PC-9 (cell line): ENCODE measurements at regions of chr12 and their contacts with region 1.

Region 1: GRCh38 chr12:53352331-53353256 is 16.4 kb upstream of the SP7 start:
- DNase-seq: peak; percentile 80
- H3K4me3 ChIP-seq: no peak overlapping the region
- H3K27ac ChIP-seq: peak overlapping the region; percentile 29
- H3K4me1 ChIP-seq: peaks cover 6% of the 10 kb centered on the region
- H3K27me3 ChIP-seq: no peaks in the 10 kb centered on the region
- CTCF ChIP-seq: peak; percentile 91

Region 2: GRCh38 chr12:53047221-53048042 is 305.2 kb before region 1 on chr12:
- CTCF ChIA-PET with region 1: interaction called, 4 read pairs
- POLR2A ChIA-PET with region 1: interaction called, 28 read pairs
- intact Hi-C with region 1: no loop called
- DNase-seq: peak in 1 of 2 experiments; percentile 86
- H3K4me3 ChIP-seq: no peak overlapping the region; the same call in 1 of the 2 replicates
- H3K27ac ChIP-seq: peak overlapping the region; percentile 36; the same call in 1 of the 2 replicates
- H3K4me1 ChIP-seq: peaks cover 25% of the 10 kb centered on the region
- H3K27me3 ChIP-seq: no peaks in the 10 kb centered on the region
- CTCF ChIP-seq: peak; percentile 42

Region 3: GRCh38 chr12:53213348-53213747 is 139.2 kb before region 1 on chr12:
- CTCF ChIA-PET with region 1: no interaction called
- POLR2A ChIA-PET with region 1: no interaction called
- intact Hi-C with region 1: no loop called
- DNase-seq: peak in 1 of 2 experiments; percentile 75
- H3K4me3 ChIP-seq: no peak overlapping the region
- H3K27ac ChIP-seq: no peak overlapping the region
- H3K4me1 ChIP-seq: peaks cover 30% of the 10 kb centered on the region
- H3K27me3 ChIP-seq: no peaks in the 10 kb centered on the region
- CTCF ChIP-seq: peak; percentile 92

Region 4: DNA sequence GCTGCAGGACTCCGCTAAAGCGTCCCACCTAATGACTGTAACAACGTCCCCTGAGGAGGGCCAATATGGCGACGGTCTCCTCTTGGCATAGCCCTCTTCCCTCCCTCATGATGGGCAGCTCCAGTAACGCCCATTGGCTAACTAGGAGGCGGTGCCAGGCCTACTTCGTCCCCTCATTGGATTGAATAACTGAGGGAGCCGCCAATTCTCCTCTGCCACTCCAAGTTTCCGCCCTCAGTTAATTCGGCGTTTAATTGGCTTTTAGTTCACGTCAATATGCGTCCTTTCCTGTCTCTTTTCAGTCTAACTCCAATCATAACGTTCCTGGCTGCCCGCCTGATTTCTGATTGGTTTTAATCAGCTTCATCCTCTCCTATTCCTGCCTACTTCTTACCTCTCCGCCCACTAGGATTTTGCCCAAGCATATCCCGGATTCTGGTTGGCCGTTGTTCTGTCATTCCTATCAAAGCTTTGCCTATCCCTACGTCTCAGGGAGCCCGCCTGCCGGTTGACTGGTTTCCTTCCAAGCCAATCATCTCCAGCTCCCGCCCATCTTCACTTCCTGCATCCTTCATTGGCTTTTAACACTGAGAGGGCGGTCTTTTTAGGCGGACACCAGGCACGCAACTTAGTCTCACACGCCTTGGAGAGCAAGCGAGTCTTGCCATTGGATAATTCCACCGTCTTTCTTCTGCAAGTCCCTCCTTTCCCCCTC is 27.0 kb after region 1 on chr12:
- CTCF ChIA-PET with region 1: interaction called, 24 read pairs
- POLR2A ChIA-PET with region 1: interaction called, 4 read pairs
- intact Hi-C with region 1: loop called (anchors 1 kb)
- DNase-seq: peak; percentile 98 to 100
- H3K4me3 ChIP-seq: peak overlapping the region; percentile 76
- H3K27ac ChIP-seq: peak overlapping the region; percentile 83
- H3K4me1 ChIP-seq: peaks cover 40% of the 10 kb centered on the region
- H3K27me3 ChIP-seq: no peaks in the 10 kb centered on the region
- CTCF ChIP-seq: no peak

Region 5: DNA sequence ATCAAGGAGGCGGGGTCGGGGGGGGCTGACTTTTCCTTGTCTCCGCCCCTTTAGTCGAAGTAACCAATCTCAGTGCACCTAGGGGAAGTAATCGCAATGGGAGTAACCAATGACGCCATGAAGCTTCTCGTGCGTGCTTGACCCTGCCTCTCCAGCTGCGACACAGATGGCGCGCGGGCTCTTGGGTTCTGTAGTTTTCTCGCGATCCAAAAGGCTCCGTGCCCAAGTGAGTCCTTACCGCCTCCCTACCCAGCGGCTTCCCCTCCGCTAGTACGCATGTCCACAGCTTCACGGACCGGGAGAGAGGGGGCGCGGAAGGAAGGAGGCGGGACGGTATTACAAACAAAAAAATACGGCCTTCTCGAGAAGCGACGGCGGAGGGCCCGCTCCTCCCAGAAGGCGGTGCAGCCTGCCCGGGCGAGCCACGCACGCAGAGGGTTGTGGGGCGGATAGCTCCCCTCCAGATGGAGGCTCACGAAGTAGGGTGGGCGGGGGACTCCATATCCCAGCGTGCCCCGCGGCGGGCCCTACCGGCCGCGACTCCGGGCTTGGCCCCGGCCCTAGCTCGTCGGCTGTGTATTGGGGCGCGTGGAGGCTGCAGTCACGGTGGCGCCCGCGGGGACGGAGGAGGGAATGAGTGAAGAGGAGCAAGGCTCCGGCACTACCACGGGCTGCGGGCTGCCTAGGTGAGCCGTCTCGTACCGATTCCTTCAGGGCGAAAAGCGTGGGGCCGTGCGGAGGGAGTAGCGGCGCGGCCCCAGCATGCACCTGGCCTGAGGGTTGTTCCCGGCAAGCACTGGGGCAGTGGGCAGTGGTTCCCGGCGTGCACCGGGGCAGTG is 148.4 kb after region 1 on chr12 and contains the start of gene TARBP2:
- CTCF ChIA-PET with region 1: interaction called, 3 read pairs
- POLR2A ChIA-PET with region 1: interaction called, 10 read pairs
- intact Hi-C with region 1: no loop called
- DNase-seq: peak; percentile 98
- H3K4me3 ChIP-seq: peak within 1 kb of the TSS; percentile 77
- H3K27ac ChIP-seq: peak within 1 kb of the TSS; percentile 81
- H3K4me1 ChIP-seq: peaks cover 17% of the 10 kb centered on the region
- H3K27me3 ChIP-seq: no peaks in the 10 kb centered on the region
- CTCF ChIP-seq: no peak
- total RNA-seq, gene TARBP2: 47.8 and 53.3 TPM in 2 replicates

Region 6: GRCh38 chr12:53508534-53509199 is 156.1 kb after region 1 on chr12:
- CTCF ChIA-PET with region 1: interaction called, 3 read pairs
- POLR2A ChIA-PET with region 1: no interaction called
- intact Hi-C with region 1: loop called (anchors 1 kb)
- DNase-seq: peak; percentile 51 to 81
- H3K4me3 ChIP-seq: no peak overlapping the region
- H3K27ac ChIP-seq: no peak overlapping the region
- H3K4me1 ChIP-seq: no peaks in the 10 kb centered on the region
- H3K27me3 ChIP-seq: no peaks in the 10 kb centered on the region
- CTCF ChIP-seq: peak; percentile 90

Region 7: DNA sequence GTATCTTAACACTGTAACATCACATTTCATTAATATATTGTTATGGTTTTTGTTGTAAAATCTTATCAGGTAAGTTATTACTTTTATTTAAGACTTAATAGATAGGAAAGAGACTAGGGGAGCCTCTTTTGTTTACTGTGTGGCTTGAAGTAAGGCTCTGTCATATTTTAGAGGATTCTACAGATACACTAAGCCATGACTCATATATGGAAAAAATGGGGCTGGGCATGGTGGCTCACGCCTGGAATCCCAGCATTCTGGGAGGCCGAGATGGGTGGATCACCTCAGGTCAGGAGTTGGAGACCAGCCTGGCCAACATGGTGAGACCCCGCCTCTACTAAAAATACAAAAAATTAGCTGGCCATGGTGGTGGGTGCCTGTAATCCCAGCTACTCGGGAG is 178.3 kb after region 1 on chr12:
- CTCF ChIA-PET with region 1: interaction called, 13 read pairs
- POLR2A ChIA-PET with region 1: no interaction called
- intact Hi-C with region 1: no loop called
- DNase-seq: peak; percentile 25 to 38
- H3K4me3 ChIP-seq: no peak overlapping the region
- H3K27ac ChIP-seq: no peak overlapping the region
- H3K4me1 ChIP-seq: 0 out of 2 replicates have a peak, but pooled peaks cover 7% of the 10 kb centered on the region
- H3K27me3 ChIP-seq: no peaks in the 10 kb centered on the region
- CTCF ChIP-seq: no peak